ENCODE measurements at regions of chr1 and their contacts with region 1.

Region 1: GRCh38 chr1:209207701-209208286 is 375.7 kb upstream of the CAMK1G start:
- DNase-seq: peak; percentile 79

Region 2: DNA sequence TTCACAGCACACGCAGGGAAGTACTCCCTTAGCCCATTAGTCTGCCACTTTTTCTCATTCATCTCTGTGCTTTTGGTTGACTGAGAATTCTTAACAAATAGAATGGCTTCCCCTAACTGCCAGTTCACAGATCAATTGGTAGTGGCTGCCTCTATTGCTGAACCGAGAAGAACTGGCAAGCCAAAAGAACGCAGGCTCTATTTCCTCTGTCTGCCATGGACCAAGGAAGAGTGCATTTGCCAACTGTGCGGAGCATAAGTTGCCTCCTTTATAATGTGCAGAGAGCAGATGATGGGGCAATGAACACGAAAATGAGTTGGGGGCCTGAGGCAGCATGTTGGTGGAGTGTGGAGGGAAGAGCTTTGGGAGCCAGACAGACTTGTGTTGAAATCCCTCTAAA is 107.3 kb before region 1 on chr1:
- CTCF ChIA-PET with region 1: no interaction called
- POLR2A ChIA-PET with region 1: no interaction called
- DNase-seq: no peak

Region 3: GRCh38 chr1:209248649-209249279 is 41.0 kb after region 1 on chr1:
- CTCF ChIA-PET with region 1: interaction called, 14 read pairs
- POLR2A ChIA-PET with region 1: no interaction called
- DNase-seq: peak; percentile 72